ENCODE measurements at regions of chr16 and their contacts with region 1.

Region 1: GRCh38 chr16:636206-637080 is at the start of gene METTL26:
- DNase-seq: peak; percentile 91
- H3K4me3 Mint-ChIP-seq: peak within 1 kb of the TSS; percentile 85
- H3K27ac Mint-ChIP-seq: peak within 1 kb of the TSS; percentile 91
- H3K4me1 Mint-ChIP-seq: peaks cover 6% of the 10 kb centered on the region
- H3K27me3 Mint-ChIP-seq: no peaks in the 10 kb centered on the region
- total RNA-seq, gene METTL26: 141 and 147 TPM in 2 replicates

Region 2: GRCh38 chr16:352547-353403 is 283.7 kb before region 1 on chr16 and contains the start of gene AXIN1:
- intact Hi-C with region 1: loop called (anchors 2 kb)
- DNase-seq: peak; percentile 97
- H3K4me3 Mint-ChIP-seq: peak within 1 kb of the TSS; percentile 92
- H3K27ac Mint-ChIP-seq: peak within 1 kb of the TSS; percentile 87
- H3K4me1 Mint-ChIP-seq: peaks cover 8% of the 10 kb centered on the region
- H3K27me3 Mint-ChIP-seq: peaks cover 4% of the 10 kb centered on the region
- total RNA-seq, gene AXIN1: 28.1 and 30.3 TPM in 2 replicates

Region 3: GRCh38 chr16:425082-425718 is 211.2 kb before region 1 on chr16 and contains the start of gene RAB11FIP3:
- intact Hi-C with region 1: loop called (anchors 1 kb)
- DNase-seq: peak; percentile 83
- H3K4me3 Mint-ChIP-seq: peak within 1 kb of the TSS; percentile 84
- H3K27ac Mint-ChIP-seq: peak within 1 kb of the TSS; percentile 88
- H3K4me1 Mint-ChIP-seq: peaks cover 32% of the 10 kb centered on the region
- H3K27me3 Mint-ChIP-seq: peaks cover 16% of the 10 kb centered on the region
- total RNA-seq, gene RAB11FIP3: 41.4 and 47.5 TPM in 2 replicates

Region 4: GRCh38 chr16:589658-590159 is 46.7 kb before region 1 on chr16 and contains the start of gene RAB40C:
- intact Hi-C with region 1: loop called (anchors 1 kb)
- DNase-seq: peak; percentile 97
- H3K4me3 Mint-ChIP-seq: peak within 1 kb of the TSS; percentile 97
- H3K27ac Mint-ChIP-seq: peak within 1 kb of the TSS; percentile 100
- H3K4me1 Mint-ChIP-seq: peaks cover 26% of the 10 kb centered on the region
- H3K27me3 Mint-ChIP-seq: no peaks in the 10 kb centered on the region
- total RNA-seq, gene RAB40C: 14.0 and 15.2 TPM in 2 replicates

Region 5: DNA sequence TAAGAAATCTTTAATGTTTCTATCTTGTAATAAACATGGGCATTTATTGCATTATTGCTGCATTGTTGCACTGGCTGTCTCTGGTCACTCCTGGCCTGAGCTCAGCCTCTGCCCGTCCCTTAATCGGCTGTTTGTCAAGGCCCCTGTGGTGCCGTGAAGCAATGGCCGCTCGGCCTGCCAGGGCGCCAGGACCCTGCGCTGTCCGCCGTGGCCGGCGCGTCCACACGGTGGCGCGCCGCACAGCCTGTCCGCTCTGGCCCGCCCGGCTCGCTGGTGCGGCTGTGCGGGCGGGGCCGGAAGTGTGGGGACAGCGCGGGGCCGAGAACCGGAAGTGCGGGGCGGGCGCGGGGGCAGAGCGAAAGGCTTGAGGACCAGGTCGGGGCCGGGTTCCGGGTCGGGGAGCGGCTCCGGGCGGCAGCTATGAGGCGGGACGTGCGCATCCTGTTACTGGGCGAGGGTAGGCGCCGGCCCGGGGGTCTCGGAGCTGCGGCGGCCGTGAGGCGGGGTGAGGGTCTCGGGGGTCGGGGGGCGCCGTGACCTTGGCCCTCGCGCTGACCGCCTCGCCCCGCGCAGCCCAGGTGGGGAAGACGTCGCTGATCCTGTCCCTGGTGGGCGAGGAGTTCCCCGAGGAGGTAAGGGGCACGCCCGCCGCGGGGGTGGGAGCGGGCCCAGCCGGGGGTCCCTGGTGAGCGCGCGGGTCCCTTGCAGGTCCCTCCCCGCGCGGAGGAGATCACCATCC is 31.5 kb after region 1 on chr16 and contains the start of gene RHOT2:
- intact Hi-C with region 1: loop called (anchors 1 kb)
- DNase-seq: peak; percentile 94
- H3K4me3 Mint-ChIP-seq: peak within 1 kb of the TSS; percentile 85
- H3K27ac Mint-ChIP-seq: peak within 1 kb of the TSS; percentile 86
- H3K4me1 Mint-ChIP-seq: peaks cover 4% of the 10 kb centered on the region
- H3K27me3 Mint-ChIP-seq: no peaks in the 10 kb centered on the region
- total RNA-seq, gene RHOT2: 165 and 177 TPM in 2 replicates

Region 6: GRCh38 chr16:1054660-1055556 is 418.5 kb after region 1 on chr16:
- intact Hi-C with region 1: no loop called
- DNase-seq: no peak
- H3K4me3 Mint-ChIP-seq: no peak overlapping the region
- H3K27ac Mint-ChIP-seq: no peak overlapping the region
- H3K4me1 Mint-ChIP-seq: no peaks in the 10 kb centered on the region
- H3K27me3 Mint-ChIP-seq: no peaks in the 10 kb centered on the region

Region 7: DNA sequence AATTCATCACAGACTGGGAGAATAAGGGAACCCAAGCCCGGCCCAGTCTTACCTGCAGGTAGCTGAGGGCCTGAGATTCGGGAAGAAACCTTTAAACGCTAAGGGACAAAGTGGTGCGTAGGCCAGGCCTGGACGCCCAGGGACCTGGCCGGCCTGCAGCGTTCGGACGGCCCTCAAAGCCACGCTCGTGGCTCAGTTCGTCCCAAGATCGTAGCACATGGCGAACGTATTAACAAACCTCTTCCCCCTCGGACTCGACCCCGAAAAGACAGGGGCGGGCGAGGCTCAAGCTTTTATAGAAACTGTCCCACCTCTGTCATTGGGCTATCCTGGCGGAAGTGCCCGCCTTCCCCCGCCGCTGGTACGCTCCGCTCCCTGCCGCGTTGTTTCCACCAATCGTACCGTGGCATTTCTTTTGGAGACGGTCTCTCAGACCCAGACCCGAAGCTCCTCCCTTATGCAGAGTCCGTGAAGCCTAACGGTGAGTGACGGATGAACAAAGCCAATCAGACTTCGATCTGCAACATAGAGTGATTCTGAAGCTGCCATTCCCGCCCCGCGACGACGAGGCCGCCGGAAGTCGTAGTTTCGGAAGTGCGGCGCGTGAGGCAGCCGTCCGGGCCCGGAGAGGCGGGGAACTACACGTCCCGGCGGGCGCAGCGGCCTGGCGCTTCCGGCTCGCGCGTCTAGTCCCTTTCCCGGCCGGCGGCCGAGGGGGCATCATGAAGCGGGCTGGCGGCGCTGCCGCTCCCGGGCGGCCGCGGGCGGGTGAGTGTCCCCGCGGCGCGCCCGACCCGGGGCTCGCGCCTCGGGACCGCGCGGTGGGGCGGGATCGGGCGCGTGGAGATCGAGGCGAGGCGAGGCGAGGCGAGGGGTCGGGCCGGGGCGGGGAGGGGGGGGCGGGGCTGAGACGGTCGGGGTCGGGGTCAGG is 1518.9 kb after region 1 on chr16 and contains the start of gene TRAF7:
- intact Hi-C with region 1: loop called (anchors 5 kb)
- DNase-seq: peak; percentile 98
- H3K4me3 Mint-ChIP-seq: peak within 1 kb of the TSS; percentile 99
- H3K27ac Mint-ChIP-seq: peak within 1 kb of the TSS; percentile 93
- H3K4me1 Mint-ChIP-seq: peaks cover 24% of the 10 kb centered on the region
- H3K27me3 Mint-ChIP-seq: no peaks in the 10 kb centered on the region
- total RNA-seq, gene TRAF7: 70.4 and 73.1 TPM in 2 replicates